GM13976 (cell line): ENCODE measurements at regions of chr7 and their contacts with region 1.

Region 1: GRCh38 chr7:32218154-32218467 is 147.9 kb upstream of the PDE1C start:
- DNase-seq: no peak
- CTCF ChIP-seq: no peak

Region 2: GRCh38 chr7:31517513-31517912 is 700.6 kb before region 1 on chr7:
- in situ Hi-C with region 1: no loop called
- DNase-seq: no peak
- CTCF ChIP-seq: no peak

Region 3: GRCh38 chr7:32347244-32347828 is 129.2 kb after region 1 on chr7:
- in situ Hi-C with region 1: loop called (anchors 10 kb)
- DNase-seq: peak; percentile 35
- CTCF ChIP-seq: peak; percentile 57